A549 (cell line): ENCODE measurements at regions of chr1 and their contacts with region 1.

Region 1: DNA sequence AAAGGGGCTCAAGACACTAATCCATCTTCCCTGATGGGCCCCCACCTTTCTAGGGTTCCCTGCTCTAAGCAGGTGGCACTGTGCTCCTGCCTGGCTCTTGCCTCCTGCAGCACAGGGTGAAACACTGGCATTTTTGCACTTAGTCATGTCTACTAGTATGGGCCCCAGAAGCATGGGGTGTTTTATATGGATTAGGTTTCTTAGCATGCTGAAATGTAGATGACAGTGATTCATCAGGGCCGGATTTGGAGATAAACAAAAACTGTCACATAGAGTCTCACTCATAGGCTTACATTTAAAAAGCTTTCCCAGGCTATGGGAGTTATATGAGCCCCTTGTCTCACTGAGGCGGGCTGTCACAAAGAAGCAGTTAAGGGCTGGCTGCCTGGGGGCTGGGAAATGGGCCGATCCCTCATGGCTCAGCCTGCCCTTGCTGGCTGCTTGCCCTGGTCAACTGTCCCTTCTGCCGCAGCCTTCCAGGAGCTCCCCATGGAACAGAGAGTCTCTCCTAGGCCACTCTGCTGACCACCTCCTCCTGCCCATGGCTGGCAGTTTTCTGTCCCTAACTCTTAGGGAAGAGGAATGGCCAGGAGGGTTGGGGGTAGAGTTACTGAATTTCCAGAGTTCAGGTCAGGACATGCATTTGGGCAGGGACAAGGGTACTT is 6.5 kb downstream of the GALNT2 start:
- DNase-seq: peak in 1 of 2 experiments; percentile 27
- ATAC-seq: peak in 1 of 2 experiments; percentile 37; a peak in 3 of 6 replicates
- H3K4me3 ChIP-seq: no peak overlapping the region
- H3K27ac ChIP-seq: peak overlapping the region; percentile 10 to 76; a peak in 3 of 6 replicates
- H3K4me1 ChIP-seq: peaks cover 82% of the 10 kb centered on the region
- CTCF ChIP-seq: no peak
- EP300 ChIP-seq: no peak
- POLR2A ChIP-seq: no peak
- RAD21 ChIP-seq: no peak

Region 2: GRCh38 chr1:230057681-230058620 is 15.6 kb before region 1 on chr1:
- CTCF ChIA-PET with region 1: no interaction called
- POLR2A ChIA-PET with region 1: no interaction called
- DNase-seq: no peak
- ATAC-seq: no peak
- H3K4me3 ChIP-seq: no peak overlapping the region
- H3K27ac ChIP-seq: no peak overlapping the region
- H3K4me1 ChIP-seq: no peaks in the 10 kb centered on the region
- CTCF ChIP-seq: no peak
- EP300 ChIP-seq: no peak
- POLR2A ChIP-seq: no peak
- RAD21 ChIP-seq: no peak

Region 3: DNA sequence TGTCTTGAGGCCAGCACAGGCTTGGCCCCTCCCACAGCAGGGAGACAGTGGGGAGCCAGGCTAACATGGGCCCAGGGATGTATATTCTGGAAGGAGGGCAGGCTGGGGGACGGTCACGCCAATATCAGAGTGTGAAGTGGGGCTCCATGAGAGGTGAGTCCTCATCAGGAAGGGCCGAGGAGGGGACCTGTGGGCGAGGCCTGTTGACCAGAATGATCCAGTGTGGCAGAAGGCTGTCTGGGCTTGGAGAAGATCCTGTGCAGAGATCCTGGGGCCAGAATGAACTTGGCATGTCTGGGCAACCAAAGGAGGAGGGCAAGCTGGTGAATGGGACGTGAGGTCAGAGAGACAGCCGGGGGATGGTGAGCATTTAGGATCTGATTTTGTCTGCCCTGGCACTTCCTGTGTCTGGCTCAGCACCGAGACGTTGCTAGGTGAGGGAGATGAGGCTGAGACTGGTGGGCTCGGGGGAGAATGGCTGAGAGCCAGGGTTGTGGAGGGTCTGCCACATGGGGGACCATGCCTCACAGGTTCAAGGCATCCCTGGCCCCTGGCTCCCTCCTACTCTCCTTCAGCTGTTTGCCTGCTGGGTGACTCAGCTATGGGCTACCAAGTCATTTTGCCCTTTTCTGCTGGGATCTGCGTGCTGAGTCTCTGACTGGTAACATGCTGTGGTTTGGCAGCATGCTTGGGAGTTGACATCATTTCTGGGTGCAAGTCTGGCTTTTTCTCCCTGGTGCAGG is 10.8 kb after region 1 on chr1:
- CTCF ChIA-PET with region 1: interaction called, 13 read pairs
- POLR2A ChIA-PET with region 1: interaction called, 3 read pairs
- DNase-seq: peak; percentile 90 to 97
- ATAC-seq: peak; percentile 95
- H3K4me3 ChIP-seq: no peak overlapping the region; the same call in 2 of the 3 replicates
- H3K27ac ChIP-seq: peak overlapping the region; percentile 86 to 94
- H3K4me1 ChIP-seq: peaks cover 65% of the 10 kb centered on the region
- CTCF ChIP-seq: no peak
- EP300 ChIP-seq: peak; percentile 58 to 80; a peak in 2 of 5 replicates
- POLR2A ChIP-seq: no peak
- RAD21 ChIP-seq: peak; percentile 26 to 42; a peak in 4 of 5 replicates